IMR-90 (cell line): ENCODE measurements at regions of chr7 and their contacts with region 1.

Region 1: GRCh38 chr7:21427182-21427870 is 557 bp upstream of the SP4 start:
- DNase-seq: peak; percentile 97
- ATAC-seq: peak; percentile 82
- H3K4me3 ChIP-seq: peak overlapping the region; percentile 61
- H3K27ac ChIP-seq: peak overlapping the region; percentile 22; the same call in 1 of the 2 replicates
- H3K4me1 ChIP-seq: peaks cover 4% of the 10 kb centered on the region; the same call in 1 of the 2 replicates
- H3K27me3 ChIP-seq: no peaks in the 10 kb centered on the region
- CTCF ChIP-seq: no peak
- POLR2A ChIP-seq: peak; percentile 76
- RAD21 ChIP-seq: no peak

Region 2: GRCh38 chr7:20786779-20787659 is 640.3 kb before region 1 on chr7 and contains the start of gene SP8:
- CTCF ChIA-PET with region 1: no interaction called
- POLR2A ChIA-PET with region 1: no interaction called
- dilution Hi-C with region 1: no loop called
- in situ Hi-C with region 1: no loop called
- intact Hi-C with region 1: loop called (anchors 5 kb)
- DNase-seq: peak; percentile 11
- ATAC-seq: peak; percentile 65
- H3K4me3 ChIP-seq: peak within 1 kb of the TSS; percentile 74
- H3K27ac ChIP-seq: no peak within 1 kb of the TSS
- H3K4me1 ChIP-seq: peaks cover 3% of the 10 kb centered on the region; the same call in 1 of the 2 replicates
- H3K27me3 ChIP-seq: peaks cover 69% of the 10 kb centered on the region
- CTCF ChIP-seq: no peak
- POLR2A ChIP-seq: no peak
- RAD21 ChIP-seq: no peak
- total RNA-seq, gene SP8: not detected in 2 replicates

Region 3: DNA sequence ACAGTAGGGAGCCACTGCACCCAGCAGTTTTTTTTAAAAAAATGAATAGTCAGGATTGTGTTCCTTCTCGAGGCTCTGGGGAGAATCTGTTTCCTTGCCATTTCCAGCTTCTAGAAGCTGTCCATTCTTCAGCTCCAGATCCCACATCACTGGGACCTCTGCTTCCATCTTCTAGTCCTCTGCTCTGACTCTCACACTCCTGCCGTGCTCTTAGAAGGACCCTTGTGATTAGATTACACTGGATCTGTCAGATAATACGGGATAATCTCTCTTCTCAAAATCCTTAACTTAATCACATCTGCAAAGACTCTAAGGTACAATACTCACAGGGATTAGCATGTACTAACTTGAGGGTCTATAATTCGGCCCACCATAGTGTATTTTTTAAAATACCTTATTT is 158.3 kb before region 1 on chr7:
- CTCF ChIA-PET with region 1: no interaction called
- POLR2A ChIA-PET with region 1: no interaction called
- dilution Hi-C with region 1: no loop called
- in situ Hi-C with region 1: no loop called
- intact Hi-C with region 1: no loop called
- DNase-seq: no peak
- ATAC-seq: no peak
- H3K4me3 ChIP-seq: no peak overlapping the region
- H3K27ac ChIP-seq: no peak overlapping the region
- H3K4me1 ChIP-seq: no peaks in the 10 kb centered on the region
- H3K27me3 ChIP-seq: no peaks in the 10 kb centered on the region
- CTCF ChIP-seq: no peak
- POLR2A ChIP-seq: no peak
- RAD21 ChIP-seq: no peak

Region 4: DNA sequence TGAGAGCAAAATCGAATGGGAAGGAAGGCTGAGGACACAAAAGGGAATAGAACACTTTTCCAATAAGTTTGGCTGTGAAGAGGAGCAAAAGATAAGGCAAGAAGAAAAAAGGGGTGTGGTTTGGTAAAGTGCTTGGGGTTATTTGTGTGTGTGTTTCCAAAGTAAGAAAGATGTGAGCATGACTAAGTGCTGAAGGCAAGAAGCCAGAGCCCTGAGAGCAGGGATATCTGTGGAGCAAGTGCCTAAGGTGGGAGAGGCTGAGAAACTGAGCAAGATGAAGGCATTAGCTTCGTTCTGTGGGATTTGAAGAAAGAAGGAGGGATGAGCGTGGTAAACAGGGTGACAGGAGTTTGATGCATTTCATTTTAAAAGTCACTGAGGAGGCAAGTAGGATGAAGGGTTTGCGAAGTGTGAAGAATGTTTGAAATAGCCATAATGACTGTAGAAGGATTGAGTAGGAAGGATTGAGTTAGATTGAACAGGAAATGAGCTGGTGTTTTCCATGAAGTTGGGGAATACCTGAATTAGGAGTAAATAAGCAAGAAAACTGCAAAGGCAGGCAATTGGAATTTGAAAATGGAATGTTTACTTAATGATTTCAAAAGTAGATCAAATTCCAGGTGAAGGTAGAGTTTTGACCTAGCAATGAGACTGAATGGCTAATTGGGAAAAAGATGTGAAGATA is 19.4 kb before region 1 on chr7:
- CTCF ChIA-PET with region 1: interaction called, 6 read pairs
- POLR2A ChIA-PET with region 1: interaction called, 17 read pairs
- dilution Hi-C with region 1: no loop called
- in situ Hi-C with region 1: no loop called
- intact Hi-C with region 1: no loop called
- DNase-seq: no peak
- ATAC-seq: no peak
- H3K4me3 ChIP-seq: no peak overlapping the region
- H3K27ac ChIP-seq: no peak overlapping the region
- H3K4me1 ChIP-seq: no peaks in the 10 kb centered on the region
- H3K27me3 ChIP-seq: no peaks in the 10 kb centered on the region
- CTCF ChIP-seq: no peak
- POLR2A ChIP-seq: no peak
- RAD21 ChIP-seq: no peak